B cell (primary cell): ENCODE measurements at regions of chr3 and their contacts with region 1.

Region 1: DNA sequence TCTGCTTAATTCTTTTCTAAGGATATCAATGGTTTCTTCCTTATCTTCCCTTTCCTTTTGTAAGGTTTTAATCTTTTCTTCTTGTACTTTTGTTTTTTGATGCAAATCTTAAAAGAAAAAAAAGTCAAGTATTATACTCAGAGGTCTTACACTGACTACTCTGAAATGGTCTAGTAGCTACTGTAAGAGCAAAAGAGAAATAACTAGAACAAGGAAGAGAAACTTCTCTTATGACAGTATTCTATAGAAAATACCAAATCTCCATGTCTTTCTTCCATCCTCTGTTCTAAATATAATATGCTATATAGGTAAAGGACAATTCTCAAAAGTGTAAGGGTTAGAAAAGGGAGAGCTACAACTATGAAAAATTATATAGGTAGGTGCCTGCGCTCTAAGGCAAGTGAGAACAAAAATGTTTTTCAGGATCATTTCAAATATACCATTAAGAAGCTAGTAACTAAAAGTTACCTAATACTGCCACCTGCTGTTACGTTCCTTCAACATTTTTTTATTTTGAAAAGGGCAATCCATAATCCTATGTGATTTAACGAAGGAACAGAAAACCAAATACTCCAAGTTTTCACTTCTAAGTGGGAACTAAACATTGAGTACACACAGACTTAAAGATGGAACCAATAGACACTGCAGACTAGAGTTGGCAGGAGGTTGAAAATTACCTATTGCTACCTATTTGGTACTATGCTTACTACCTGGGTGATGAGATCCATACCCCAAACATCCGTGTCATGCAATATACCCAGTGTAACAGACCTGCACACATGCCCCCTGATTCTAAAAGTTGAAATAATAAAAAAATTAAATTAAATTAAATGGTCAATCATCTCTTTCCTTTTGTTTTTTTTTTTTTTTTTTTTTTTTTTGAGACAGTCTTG is 36.7 kb downstream of the CIP2A start:
- DNase-seq: peak; percentile 70
- ATAC-seq: peak; percentile 51
- H3K4me3 ChIP-seq: no peak overlapping the region
- H3K4me3 Mint-ChIP-seq: no peak overlapping the region
- H3K27ac ChIP-seq: peak overlapping the region in 1 of 2 donors; percentile 65
- H3K27ac Mint-ChIP-seq: peak overlapping the region; percentile 18
- H3K4me1 ChIP-seq: peaks cover 0 to 8% of the 10 kb centered on the region in 2 donors
- H3K4me1 Mint-ChIP-seq: peaks cover 7% of the 10 kb centered on the region
- H3K27me3 ChIP-seq: no peaks in the 10 kb centered on the region
- H3K27me3 Mint-ChIP-seq: no peaks in the 10 kb centered on the region
- CTCF ChIP-seq: peak; percentile 75

Region 2: GRCh38 chr3:108345492-108346205 is 206.9 kb before region 1 on chr3:
- CTCF ChIA-PET with region 1: no interaction called
- POLR2A ChIA-PET with region 1: no interaction called
- intact Hi-C with region 1: no loop called
- DNase-seq: peak; percentile 33
- ATAC-seq: peak; percentile 56
- H3K4me3 ChIP-seq: no peak overlapping the region
- H3K4me3 Mint-ChIP-seq: peak overlapping the region; percentile 71
- H3K27ac ChIP-seq: peak overlapping the region in 1 of 2 donors; percentile 37
- H3K27ac Mint-ChIP-seq: peak overlapping the region; percentile 63
- H3K4me1 ChIP-seq: peaks cover 23 to 28% of the 10 kb centered on the region in 2 donors
- H3K4me1 Mint-ChIP-seq: peaks cover 27% of the 10 kb centered on the region
- H3K27me3 ChIP-seq: no peaks in the 10 kb centered on the region
- H3K27me3 Mint-ChIP-seq: no peaks in the 10 kb centered on the region
- CTCF ChIP-seq: no peak

Region 3: DNA sequence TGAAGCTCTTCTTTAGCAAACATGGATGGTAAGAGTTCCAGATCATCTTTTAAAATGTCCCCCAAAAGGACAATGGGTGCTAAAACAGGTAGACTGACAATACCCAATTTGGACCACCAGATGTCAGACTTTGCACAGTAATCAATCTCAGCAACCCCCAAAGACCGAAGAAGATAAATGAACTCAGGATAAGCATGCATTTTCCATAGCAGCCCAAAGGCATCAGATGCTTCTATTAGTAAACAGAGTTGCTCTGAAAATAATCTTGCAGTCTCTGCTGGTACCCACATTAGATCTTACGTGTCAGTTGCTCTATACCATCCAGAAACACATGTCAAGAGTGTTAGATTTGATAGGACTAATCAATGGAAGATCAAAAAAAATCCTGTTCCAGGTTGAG is 62.7 kb before region 1 on chr3:
- CTCF ChIA-PET with region 1: interaction called, 160 read pairs
- POLR2A ChIA-PET with region 1: no interaction called
- intact Hi-C with region 1: loop called (anchors 1 kb)
- DNase-seq: peak; percentile 78
- ATAC-seq: peak; percentile 68
- H3K4me3 ChIP-seq: no peak overlapping the region
- H3K4me3 Mint-ChIP-seq: no peak overlapping the region
- H3K27ac ChIP-seq: no peak overlapping the region
- H3K27ac Mint-ChIP-seq: no peak overlapping the region
- H3K4me1 ChIP-seq: peaks cover 0 to 2% of the 10 kb centered on the region in 2 donors
- H3K4me1 Mint-ChIP-seq: peaks cover 4% of the 10 kb centered on the region
- H3K27me3 ChIP-seq: no peaks in the 10 kb centered on the region
- H3K27me3 Mint-ChIP-seq: no peaks in the 10 kb centered on the region
- CTCF ChIP-seq: peak; percentile 87

Region 4: DNA sequence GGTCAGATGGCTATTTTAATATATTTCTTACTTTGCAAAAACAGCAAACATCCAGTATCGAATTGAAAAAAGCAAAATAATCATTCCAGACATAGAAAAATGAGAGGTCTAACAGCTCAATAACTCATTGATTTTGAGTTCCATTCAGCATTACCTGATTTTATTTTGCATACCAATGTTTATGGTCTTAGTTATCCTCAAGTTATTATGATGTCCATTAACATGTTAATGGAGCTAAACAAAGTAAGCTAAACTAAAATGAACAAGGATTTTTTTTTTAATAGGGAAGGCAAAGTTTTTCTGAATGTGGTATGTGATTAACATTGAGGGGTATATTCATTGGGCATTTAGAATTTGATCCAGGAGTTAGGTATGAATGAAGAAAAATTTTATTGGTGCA is 55.2 kb before region 1 on chr3:
- CTCF ChIA-PET with region 1: interaction called, 160 read pairs
- POLR2A ChIA-PET with region 1: no interaction called
- intact Hi-C with region 1: no loop called
- DNase-seq: no peak
- ATAC-seq: no peak
- H3K4me3 ChIP-seq: no peak overlapping the region
- H3K4me3 Mint-ChIP-seq: no peak overlapping the region
- H3K27ac ChIP-seq: no peak overlapping the region
- H3K27ac Mint-ChIP-seq: no peak overlapping the region
- H3K4me1 ChIP-seq: no peaks in the 10 kb centered on the region
- H3K4me1 Mint-ChIP-seq: no peaks in the 10 kb centered on the region
- H3K27me3 ChIP-seq: no peaks in the 10 kb centered on the region
- H3K27me3 Mint-ChIP-seq: no peaks in the 10 kb centered on the region
- CTCF ChIP-seq: no peak